Ovary (tissue), 10 donors: ENCODE measurements at regions of chr17 and their contacts with region 1.

Region 1: DNA sequence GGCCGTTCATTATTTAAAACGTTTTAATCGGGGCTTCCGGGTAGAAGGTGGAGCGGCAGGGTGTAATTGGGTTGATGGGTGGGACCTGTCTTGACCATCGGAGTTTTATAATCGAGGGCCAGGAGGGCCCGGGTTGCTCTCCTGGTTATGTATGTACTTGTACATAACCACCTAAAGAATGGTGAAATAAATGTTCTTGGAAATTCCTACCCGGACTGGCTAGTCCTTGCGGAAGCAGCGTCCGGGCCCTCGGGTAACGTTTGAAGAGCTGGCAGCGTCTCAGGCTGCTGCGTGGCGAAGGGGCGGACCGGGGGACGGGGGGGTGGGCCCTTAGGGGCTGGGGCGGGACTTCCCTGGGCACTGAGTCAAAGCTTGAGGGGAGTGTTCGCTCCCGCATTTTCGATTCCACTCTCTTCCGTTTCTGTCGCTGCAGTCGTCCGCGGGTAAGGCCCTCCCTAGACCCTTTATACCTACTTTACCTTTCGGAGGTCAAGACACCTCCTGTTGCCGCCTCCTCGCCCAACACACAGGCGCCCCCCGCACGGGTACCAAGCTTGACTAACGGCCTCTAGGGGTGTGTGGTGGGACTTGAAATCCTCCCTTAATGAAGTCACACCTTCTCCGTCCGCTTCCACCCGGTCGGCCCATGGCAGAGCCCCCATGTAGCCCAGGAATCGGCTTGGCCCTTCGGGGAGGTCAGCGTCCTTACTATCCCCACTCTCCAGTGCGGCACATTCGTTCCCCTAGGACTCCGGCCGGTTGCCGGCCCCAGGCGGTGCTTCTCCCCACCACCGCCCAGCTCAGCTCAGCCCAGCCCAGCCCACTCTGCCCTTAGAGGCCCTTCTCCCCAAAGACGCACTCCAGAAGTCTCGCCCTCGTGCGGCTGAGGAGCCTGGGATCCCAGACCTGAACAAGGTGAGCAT is at the start of gene TMEM106A:
- DNase-seq: peak; percentile 83 to 89 (median 86)
- H3K4me3 ChIP-seq: peak within 1 kb of the TSS; percentile 54
- H3K27ac ChIP-seq: peak within 1 kb of the TSS; percentile 60 to 72
- H3K4me1 ChIP-seq: peaks cover 5% of the 10 kb centered on the region
- H3K27me3 ChIP-seq: no peaks in the 10 kb centered on the region
- CTCF ChIP-seq: peak in 2 of 3 donors; percentile 48 to 51
- EP300 ChIP-seq: no peak
- POLR2A ChIP-seq: no peak
- total RNA-seq, gene TMEM106A: 1.5 to 23.4 (median 15.0) TPM

Region 2: DNA sequence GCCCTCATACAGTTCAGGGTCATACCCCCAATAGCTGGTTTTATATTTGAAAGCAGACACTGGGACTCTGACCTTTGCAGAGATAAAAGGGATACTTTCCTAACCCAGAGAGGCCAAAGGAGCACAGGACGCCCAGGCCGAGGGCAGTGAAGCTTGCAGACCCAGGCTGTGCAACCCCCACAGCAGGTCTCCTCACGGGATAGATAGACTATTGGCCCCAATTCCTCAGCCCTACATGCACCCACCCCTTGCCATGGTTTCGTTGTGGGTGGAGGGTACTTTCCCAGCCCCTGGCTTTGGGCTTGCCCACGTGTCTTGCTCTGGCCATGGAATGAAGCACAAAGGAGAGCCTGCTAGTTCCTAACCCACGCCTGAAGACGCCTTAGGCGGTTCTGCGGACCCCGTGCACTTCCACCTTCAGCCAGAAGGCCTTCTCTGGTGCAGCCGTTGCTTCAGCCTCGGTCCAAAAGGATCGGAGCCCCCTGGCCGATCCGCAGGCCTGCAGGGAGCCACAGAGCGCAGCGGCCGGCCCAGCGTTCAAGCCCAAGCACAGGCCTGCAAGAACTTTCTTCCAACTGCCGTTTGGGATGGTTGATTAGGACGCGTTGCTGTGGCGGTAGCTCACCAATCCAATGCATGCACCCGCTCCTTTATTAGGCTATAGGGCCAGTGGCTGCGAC is 76.8 kb before region 1 on chr17:
- intact Hi-C with region 1: loop called in 1 of 4 experiments (anchors 10 kb)
- DNase-seq: no peak
- H3K4me3 ChIP-seq: no peak overlapping the region
- H3K27ac ChIP-seq: no peak overlapping the region
- H3K4me1 ChIP-seq: no peaks in the 10 kb centered on the region
- H3K27me3 ChIP-seq: no peaks in the 10 kb centered on the region
- CTCF ChIP-seq: no peak
- EP300 ChIP-seq: no peak
- POLR2A ChIP-seq: no peak

Region 3: DNA sequence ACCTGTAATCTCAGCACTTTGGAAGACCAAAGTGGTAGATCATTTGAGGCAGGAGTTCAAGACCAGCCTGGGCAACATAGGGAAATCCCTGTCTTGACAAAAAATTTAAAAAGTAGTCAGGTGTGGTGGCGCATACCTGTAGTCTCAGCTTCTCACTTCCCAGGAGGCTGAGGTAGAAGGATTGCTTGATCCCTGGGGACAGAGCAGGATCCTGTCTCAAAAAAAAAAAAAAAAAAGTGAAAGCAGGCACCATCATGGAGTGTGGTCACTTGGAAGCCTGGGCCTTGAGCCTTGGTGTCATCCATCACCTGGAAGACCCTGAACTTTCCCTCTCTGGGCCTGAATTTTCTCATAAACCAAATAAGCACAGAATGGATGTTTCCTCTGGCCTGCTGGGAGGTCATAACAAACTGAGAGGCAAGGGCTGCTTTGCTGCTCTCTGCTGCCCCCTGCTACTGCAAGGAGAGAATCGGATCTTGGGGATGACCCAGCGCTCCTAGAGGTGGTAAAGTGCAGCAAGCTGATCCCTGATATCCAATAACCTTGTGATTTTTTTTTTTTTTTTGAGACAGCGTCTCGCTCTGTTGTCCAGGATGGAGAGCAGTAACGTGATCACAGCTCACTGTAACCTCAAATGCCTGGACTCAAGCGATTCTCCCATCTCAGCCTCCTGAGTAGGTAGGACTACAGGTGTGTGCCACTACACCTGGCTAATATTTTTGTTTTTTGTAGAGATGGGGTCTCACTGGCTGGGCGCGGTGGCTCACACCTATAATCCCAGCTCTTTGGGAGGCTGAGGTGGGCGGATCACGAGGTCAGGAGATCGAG is 98.0 kb after region 1 on chr17:
- intact Hi-C with region 1: no loop called
- DNase-seq: peak in 1 of 5 donors; percentile 16
- H3K4me3 ChIP-seq: no peak overlapping the region
- H3K27ac ChIP-seq: no peak overlapping the region
- H3K4me1 ChIP-seq: no peaks in the 10 kb centered on the region
- H3K27me3 ChIP-seq: no peaks in the 10 kb centered on the region
- CTCF ChIP-seq: no peak
- EP300 ChIP-seq: no peak
- POLR2A ChIP-seq: no peak

Region 4: DNA sequence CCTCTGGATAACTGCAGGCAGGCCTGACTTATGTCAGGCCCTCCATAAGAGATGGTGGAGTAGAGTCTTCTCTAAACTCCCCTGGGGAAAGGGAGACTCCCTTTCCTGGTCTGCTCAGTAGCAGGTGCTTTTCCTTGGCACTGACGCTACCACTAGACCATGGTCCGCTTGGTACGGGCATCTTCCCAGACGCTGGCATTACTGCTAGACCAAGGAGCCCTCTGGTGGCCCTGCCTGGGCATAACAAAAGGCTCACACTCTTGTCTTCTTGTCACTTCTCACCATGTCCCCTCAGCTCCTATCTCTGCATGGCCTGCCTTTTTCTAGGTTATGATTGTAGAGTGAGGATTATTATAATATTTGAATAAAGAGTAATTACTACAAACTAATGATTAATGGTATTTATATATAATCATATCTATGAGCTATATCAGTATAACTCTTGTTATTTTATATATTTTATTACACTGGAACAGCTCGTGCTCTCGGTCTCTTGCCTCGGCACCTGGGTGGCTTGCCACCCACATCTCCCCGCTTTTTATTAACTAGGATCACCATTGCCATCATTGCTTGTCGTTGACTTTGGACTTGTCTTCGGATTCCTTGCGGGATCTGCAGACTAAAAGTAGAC is 127.3 kb after region 1 on chr17:
- intact Hi-C with region 1: no loop called
- DNase-seq: peak in 4 of 5 donors; percentile 41 to 71 (median 64)
- H3K4me3 ChIP-seq: no peak overlapping the region
- H3K27ac ChIP-seq: no peak overlapping the region
- H3K4me1 ChIP-seq: peaks cover 8% of the 10 kb centered on the region
- H3K27me3 ChIP-seq: no peaks in the 10 kb centered on the region
- CTCF ChIP-seq: peak in 2 of 3 donors; percentile 24
- EP300 ChIP-seq: no peak
- POLR2A ChIP-seq: no peak